ENCODE measurements at regions of chr6 and their contacts with region 1.

Region 1: DNA sequence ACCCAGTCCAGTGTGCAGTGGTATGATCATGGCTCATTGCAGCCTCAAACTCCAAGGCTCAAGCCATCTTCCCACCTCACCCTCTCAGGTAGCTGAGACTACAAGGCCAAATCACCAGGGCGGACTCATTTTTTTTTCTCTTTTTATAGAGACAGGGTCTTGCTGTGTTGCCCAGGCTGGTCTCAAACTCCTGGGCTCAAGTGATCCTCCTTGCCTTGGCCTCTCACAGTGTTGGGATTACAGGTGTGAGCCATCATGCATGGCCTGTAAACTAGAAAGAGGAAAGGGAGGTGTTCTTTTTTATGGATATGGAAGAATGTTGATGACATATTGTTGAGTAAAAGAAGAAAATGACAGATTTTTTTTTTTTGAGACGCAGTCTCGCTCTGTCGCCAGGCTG is 5.1 kb upstream of the BEND3 start:
- DNase-seq: no peak
- ATAC-seq: no peak
- H3K4me3 ChIP-seq: no peak overlapping the region
- H3K4me3 Mint-ChIP-seq: no peak overlapping the region
- H3K27ac ChIP-seq: no peak overlapping the region
- H3K27ac Mint-ChIP-seq: no peak overlapping the region
- H3K4me1 ChIP-seq: peaks cover 5 to 11% of the 10 kb centered on the region in 2 donors
- H3K4me1 Mint-ChIP-seq: peaks cover 18% of the 10 kb centered on the region
- H3K27me3 ChIP-seq: peaks cover 0 to 2% (median 0%) of the 10 kb centered on the region in 4 experiments
- H3K27me3 Mint-ChIP-seq: no peaks in the 10 kb centered on the region
- CTCF ChIP-seq: no peak

Region 2: DNA sequence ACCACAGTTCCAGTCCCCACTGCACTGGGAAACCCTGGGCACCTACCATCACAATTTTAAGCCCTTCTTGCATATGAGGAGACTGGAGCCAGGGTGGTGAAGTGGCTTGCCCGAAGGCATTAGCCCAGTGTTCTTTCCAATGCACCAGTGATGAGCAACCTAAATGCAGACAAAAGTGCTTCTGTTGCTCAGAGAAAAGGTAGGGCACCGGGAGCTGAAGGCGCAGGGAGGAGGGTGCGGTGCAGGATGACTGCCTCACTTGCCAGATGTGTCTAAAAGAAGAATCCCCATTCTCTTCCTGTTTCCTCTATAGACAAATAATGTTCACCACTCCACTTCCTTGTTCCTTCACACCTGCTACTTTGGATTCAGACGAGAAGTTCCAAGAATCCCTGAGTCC is 404.5 kb before region 1 on chr6:
- CTCF ChIA-PET with region 1: no interaction called
- POLR2A ChIA-PET with region 1: no interaction called
- intact Hi-C with region 1: no loop called
- DNase-seq: peak; percentile 58
- ATAC-seq: peak; percentile 53
- H3K4me3 ChIP-seq: peak overlapping the region in 4 of 5 experiments; percentile 25 to 55 (median 41)
- H3K4me3 Mint-ChIP-seq: peak overlapping the region; percentile 88
- H3K27ac ChIP-seq: peak overlapping the region; percentile 76
- H3K27ac Mint-ChIP-seq: peak overlapping the region; percentile 93
- H3K4me1 ChIP-seq: peaks cover 43 to 48% of the 10 kb centered on the region in 2 donors
- H3K4me1 Mint-ChIP-seq: peaks cover 54% of the 10 kb centered on the region
- H3K27me3 ChIP-seq: no peaks in the 10 kb centered on the region
- H3K27me3 Mint-ChIP-seq: no peaks in the 10 kb centered on the region
- CTCF ChIP-seq: no peak

Region 3: GRCh38 chr6:107246972-107247615 is 126.7 kb after region 1 on chr6:
- CTCF ChIA-PET with region 1: no interaction called
- POLR2A ChIA-PET with region 1: no interaction called
- intact Hi-C with region 1: no loop called
- DNase-seq: no peak
- ATAC-seq: no peak
- H3K4me3 ChIP-seq: no peak overlapping the region
- H3K4me3 Mint-ChIP-seq: no peak overlapping the region
- H3K27ac ChIP-seq: no peak overlapping the region
- H3K27ac Mint-ChIP-seq: no peak overlapping the region
- H3K4me1 ChIP-seq: no peaks in the 10 kb centered on the region
- H3K4me1 Mint-ChIP-seq: peaks cover 3% of the 10 kb centered on the region
- H3K27me3 ChIP-seq: no peaks in the 10 kb centered on the region
- H3K27me3 Mint-ChIP-seq: no peaks in the 10 kb centered on the region
- CTCF ChIP-seq: no peak

Region 4: GRCh38 chr6:107647439-107647948 is 527.1 kb after region 1 on chr6:
- CTCF ChIA-PET with region 1: no interaction called
- POLR2A ChIA-PET with region 1: interaction called, 13 read pairs
- intact Hi-C with region 1: no loop called
- DNase-seq: no peak
- ATAC-seq: no peak
- H3K4me3 ChIP-seq: no peak overlapping the region
- H3K4me3 Mint-ChIP-seq: no peak overlapping the region
- H3K27ac ChIP-seq: no peak overlapping the region
- H3K27ac Mint-ChIP-seq: no peak overlapping the region
- H3K4me1 ChIP-seq: peaks cover 29 to 36% of the 10 kb centered on the region in 2 donors
- H3K4me1 Mint-ChIP-seq: peaks cover 38% of the 10 kb centered on the region
- H3K27me3 ChIP-seq: no peaks in the 10 kb centered on the region
- H3K27me3 Mint-ChIP-seq: no peaks in the 10 kb centered on the region
- CTCF ChIP-seq: no peak

Measured in B cell (primary cell).